B cell (primary cell): ENCODE measurements at regions of chr1 and their contacts with region 1.

Region 1: DNA sequence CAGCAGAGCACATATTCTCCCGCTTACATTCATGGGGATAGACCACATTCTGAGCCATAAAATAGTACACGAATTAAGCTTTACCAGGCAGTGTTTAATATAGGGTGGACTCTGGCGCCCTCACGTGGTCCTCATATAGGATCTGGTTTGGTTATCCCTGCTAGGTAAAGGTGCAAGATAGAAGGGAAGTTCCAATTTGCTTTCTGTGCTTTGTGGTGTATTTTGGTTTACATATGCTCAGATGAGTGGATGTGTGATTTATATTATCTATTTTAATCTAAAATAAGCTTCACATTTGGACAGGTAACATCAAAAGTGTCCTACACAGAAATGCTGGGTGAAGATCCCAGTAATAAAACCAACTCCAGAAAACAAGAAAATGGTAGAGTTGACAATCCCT is 3.6 kb downstream of the CR1 start:
- DNase-seq: peak; percentile 87
- ATAC-seq: peak; percentile 60
- H3K4me3 ChIP-seq: no peak overlapping the region
- H3K4me3 Mint-ChIP-seq: no peak overlapping the region
- H3K27ac ChIP-seq: no peak overlapping the region
- H3K27ac Mint-ChIP-seq: peak overlapping the region; percentile 60
- H3K4me1 ChIP-seq: peaks cover 26 to 31% of the 10 kb centered on the region in 2 donors
- H3K4me1 Mint-ChIP-seq: peaks cover 42% of the 10 kb centered on the region
- H3K27me3 ChIP-seq: no peaks in the 10 kb centered on the region
- H3K27me3 Mint-ChIP-seq: no peaks in the 10 kb centered on the region
- CTCF ChIP-seq: peak; percentile 96

Region 2: GRCh38 chr1:206507284-206508129 is 992.1 kb before region 1 on chr1 and contains the start of gene RASSF5:
- CTCF ChIA-PET with region 1: no interaction called
- POLR2A ChIA-PET with region 1: no interaction called
- intact Hi-C with region 1: no loop called
- DNase-seq: peak; percentile 84
- ATAC-seq: peak; percentile 91
- H3K4me3 ChIP-seq: peak within 1 kb of the TSS; percentile 28 to 75 (median 64)
- H3K4me3 Mint-ChIP-seq: peak within 1 kb of the TSS; percentile 86
- H3K27ac ChIP-seq: no peak within 1 kb of the TSS
- H3K27ac Mint-ChIP-seq: peak within 1 kb of the TSS; percentile 10
- H3K4me1 ChIP-seq: peaks cover 19 to 21% of the 10 kb centered on the region in 2 donors
- H3K4me1 Mint-ChIP-seq: peaks cover 28% of the 10 kb centered on the region
- H3K27me3 ChIP-seq: peaks cover 0 to 50% (median 19%) of the 10 kb centered on the region in 4 experiments
- H3K27me3 Mint-ChIP-seq: peaks cover 32% of the 10 kb centered on the region
- CTCF ChIP-seq: no peak
- total RNA-seq, gene RASSF5: 144 and 146 TPM in 2 replicates

Region 3: DNA sequence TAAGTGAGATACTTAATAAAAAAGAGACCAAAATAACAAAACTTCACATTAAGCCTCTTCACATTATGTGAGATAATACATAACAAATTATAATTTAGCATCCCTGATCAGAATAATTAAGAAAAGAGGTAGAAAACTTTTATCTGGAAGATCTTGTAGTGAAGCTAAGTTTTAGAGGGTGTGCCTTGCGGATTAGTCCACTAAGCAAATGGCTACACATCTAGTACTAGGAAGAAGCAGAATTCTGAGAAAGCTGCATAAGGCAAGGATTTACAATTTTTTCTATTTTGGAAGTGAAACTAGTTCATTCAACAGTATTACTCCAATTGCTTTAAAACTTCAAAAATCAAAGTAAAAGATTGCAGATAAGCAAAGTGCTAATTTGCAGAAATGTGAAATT is 452.1 kb before region 1 on chr1:
- CTCF ChIA-PET with region 1: interaction called, 17 read pairs
- POLR2A ChIA-PET with region 1: no interaction called
- intact Hi-C with region 1: loop called (anchors 1 kb)
- DNase-seq: no peak
- ATAC-seq: no peak
- H3K4me3 ChIP-seq: no peak overlapping the region
- H3K4me3 Mint-ChIP-seq: no peak overlapping the region
- H3K27ac ChIP-seq: no peak overlapping the region
- H3K27ac Mint-ChIP-seq: no peak overlapping the region
- H3K4me1 ChIP-seq: peaks cover 14 to 19% of the 10 kb centered on the region in 2 donors
- H3K4me1 Mint-ChIP-seq: peaks cover 45% of the 10 kb centered on the region
- H3K27me3 ChIP-seq: no peaks in the 10 kb centered on the region
- H3K27me3 Mint-ChIP-seq: no peaks in the 10 kb centered on the region
- CTCF ChIP-seq: no peak

Region 4: DNA sequence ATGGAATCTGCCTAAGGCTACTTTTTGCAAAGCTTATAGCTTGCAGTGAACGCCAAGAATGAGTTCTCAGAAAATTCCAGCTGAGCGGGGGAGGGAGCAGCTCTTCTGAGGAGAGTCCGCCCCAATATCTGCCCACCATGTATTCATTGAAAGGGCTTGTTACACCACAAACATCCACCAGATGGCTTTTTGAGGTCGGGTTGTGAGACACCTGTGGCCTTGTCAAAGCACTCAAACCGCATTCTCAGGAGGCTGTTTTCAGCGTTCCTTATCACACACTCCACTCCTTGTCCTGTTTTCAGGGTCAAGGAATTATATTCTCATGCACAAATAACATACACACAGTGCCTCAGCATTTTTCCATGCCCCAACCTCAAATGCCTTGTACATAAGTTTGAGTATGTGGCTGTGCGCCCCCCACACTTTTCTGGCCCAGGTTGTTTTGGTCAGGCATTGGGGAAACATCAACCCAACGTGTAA is 414.8 kb before region 1 on chr1:
- CTCF ChIA-PET with region 1: interaction called, 209 read pairs
- POLR2A ChIA-PET with region 1: no interaction called
- intact Hi-C with region 1: loop called (anchors 1 kb)
- DNase-seq: peak; percentile 82
- ATAC-seq: peak; percentile 84
- H3K4me3 ChIP-seq: no peak overlapping the region
- H3K4me3 Mint-ChIP-seq: no peak overlapping the region
- H3K27ac ChIP-seq: no peak overlapping the region
- H3K27ac Mint-ChIP-seq: no peak overlapping the region
- H3K4me1 ChIP-seq: peaks cover 14 to 15% of the 10 kb centered on the region in 2 donors
- H3K4me1 Mint-ChIP-seq: peaks cover 13% of the 10 kb centered on the region
- H3K27me3 ChIP-seq: no peaks in the 10 kb centered on the region
- H3K27me3 Mint-ChIP-seq: no peaks in the 10 kb centered on the region
- CTCF ChIP-seq: peak; percentile 77

Region 5: DNA sequence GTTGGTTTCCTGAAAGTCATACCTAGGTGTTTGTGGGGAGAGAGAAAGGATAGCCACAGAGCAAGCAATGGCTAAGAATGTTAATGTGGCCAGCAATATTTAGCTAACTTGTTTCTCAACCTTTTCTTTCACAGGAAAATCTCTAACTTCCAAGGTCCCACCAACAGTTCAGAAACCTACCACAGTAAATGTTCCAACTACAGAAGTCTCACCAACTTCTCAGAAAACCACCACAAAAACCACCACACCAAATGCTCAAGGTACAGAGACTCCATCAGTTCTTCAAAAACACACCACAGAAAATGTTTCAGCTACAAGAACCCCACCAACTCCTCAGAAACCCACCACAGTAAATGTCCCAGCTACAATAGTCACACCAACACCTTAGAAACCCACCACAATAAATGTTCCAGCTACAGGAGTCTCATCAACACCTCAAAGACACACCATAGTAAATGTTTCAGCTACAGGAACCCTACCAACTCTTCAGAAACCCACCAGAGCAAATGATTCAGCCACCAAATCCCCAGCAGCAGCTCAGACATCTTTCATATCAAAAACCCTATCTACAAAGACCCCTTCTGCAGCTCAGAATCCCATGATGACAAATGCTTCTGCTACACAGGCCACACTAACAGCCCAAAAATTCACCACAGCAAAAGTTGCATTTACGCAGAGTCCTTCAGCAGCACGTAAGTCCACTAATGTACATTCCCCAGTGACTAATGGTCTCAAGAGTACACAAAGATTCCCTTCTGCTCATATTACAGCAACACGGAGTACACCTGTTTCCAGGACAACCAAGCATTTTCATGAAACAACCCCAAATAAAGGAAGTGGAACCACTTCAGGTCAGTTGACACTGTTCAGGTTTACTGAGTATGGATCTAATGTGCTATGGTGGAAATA is 162.8 kb before region 1 on chr1:
- CTCF ChIA-PET with region 1: interaction called, 3 read pairs
- POLR2A ChIA-PET with region 1: no interaction called
- intact Hi-C with region 1: loop called (anchors 5 kb)
- DNase-seq: peak; percentile 92
- ATAC-seq: peak; percentile 79
- H3K4me3 ChIP-seq: peak overlapping the region in 3 of 5 experiments; percentile 15 to 42 (median 27)
- H3K4me3 Mint-ChIP-seq: peak overlapping the region; percentile 72
- H3K27ac ChIP-seq: peak overlapping the region; percentile 95 to 98
- H3K27ac Mint-ChIP-seq: peak overlapping the region; percentile 94
- H3K4me1 ChIP-seq: peaks cover 52 to 74% of the 10 kb centered on the region in 2 donors
- H3K4me1 Mint-ChIP-seq: peaks cover 75% of the 10 kb centered on the region
- H3K27me3 ChIP-seq: no peaks in the 10 kb centered on the region
- H3K27me3 Mint-ChIP-seq: no peaks in the 10 kb centered on the region
- CTCF ChIP-seq: no peak

Region 6: GRCh38 chr1:207423560-207424292 is 75.8 kb before region 1 on chr1:
- CTCF ChIA-PET with region 1: interaction called, 12 read pairs
- POLR2A ChIA-PET with region 1: interaction called, 4 read pairs
- intact Hi-C with region 1: no loop called
- DNase-seq: no peak
- ATAC-seq: peak; percentile 39
- H3K4me3 ChIP-seq: peak overlapping the region in 3 of 5 experiments; percentile 0 to 40 (median 27)
- H3K4me3 Mint-ChIP-seq: peak overlapping the region; percentile 89
- H3K27ac ChIP-seq: no peak overlapping the region
- H3K27ac Mint-ChIP-seq: peak overlapping the region; percentile 72
- H3K4me1 ChIP-seq: peaks cover 59 to 71% of the 10 kb centered on the region in 2 donors
- H3K4me1 Mint-ChIP-seq: peaks cover 67% of the 10 kb centered on the region
- H3K27me3 ChIP-seq: no peaks in the 10 kb centered on the region
- H3K27me3 Mint-ChIP-seq: no peaks in the 10 kb centered on the region
- CTCF ChIP-seq: no peak

Region 7: GRCh38 chr1:207603777-207604176 is 104.2 kb after region 1 on chr1:
- CTCF ChIA-PET with region 1: no interaction called
- POLR2A ChIA-PET with region 1: no interaction called
- intact Hi-C with region 1: no loop called
- DNase-seq: no peak
- ATAC-seq: no peak
- H3K4me3 ChIP-seq: no peak overlapping the region
- H3K4me3 Mint-ChIP-seq: no peak overlapping the region
- H3K27ac ChIP-seq: no peak overlapping the region
- H3K27ac Mint-ChIP-seq: no peak overlapping the region
- H3K4me1 ChIP-seq: no peaks in the 10 kb centered on the region
- H3K4me1 Mint-ChIP-seq: no peaks in the 10 kb centered on the region
- H3K27me3 ChIP-seq: no peaks in the 10 kb centered on the region
- H3K27me3 Mint-ChIP-seq: no peaks in the 10 kb centered on the region
- CTCF ChIP-seq: no peak